ENCODE measurements at regions of chr12 and their contacts with region 1.

Region 1: GRCh38 chr12:47032644-47033043 is 46.8 kb upstream of the PCED1B start:
- DNase-seq: peak in 2 of 5 donors; percentile 55 to 56
- H3K4me3 ChIP-seq: no peak overlapping the region
- H3K4me3 Mint-ChIP-seq: no peak overlapping the region
- H3K27ac ChIP-seq: no peak overlapping the region
- H3K27ac Mint-ChIP-seq: peak overlapping the region in 1 of 8 donors; percentile 20
- H3K4me1 ChIP-seq: peaks cover 4% of the 10 kb centered on the region
- H3K4me1 Mint-ChIP-seq: peaks cover 17 to 19% (median 19%) of the 10 kb centered on the region in 3 donors
- H3K27me3 ChIP-seq: no peaks in the 10 kb centered on the region
- H3K27me3 Mint-ChIP-seq: peaks cover 1 to 3% of the 10 kb centered on the region in 2 donors

Region 2: GRCh38 chr12:47071241-47071852 is 38.7 kb after region 1 on chr12:
- CTCF ChIA-PET with region 1: interaction called, 22 read pairs
- POLR2A ChIA-PET with region 1: no interaction called
- DNase-seq: peak in 1 of 5 donors; percentile 31
- H3K4me3 ChIP-seq: no peak overlapping the region
- H3K4me3 Mint-ChIP-seq: no peak overlapping the region
- H3K27ac ChIP-seq: no peak overlapping the region
- H3K27ac Mint-ChIP-seq: peak overlapping the region in 1 of 8 donors; percentile 53
- H3K4me1 ChIP-seq: peaks cover under 1% of the 10 kb centered on the region
- H3K4me1 Mint-ChIP-seq: peaks cover 5 to 10% (median 10%) of the 10 kb centered on the region in 3 donors
- H3K27me3 ChIP-seq: no peaks in the 10 kb centered on the region
- H3K27me3 Mint-ChIP-seq: no peaks in the 10 kb centered on the region

Region 3: GRCh38 chr12:47307680-47308399 is 275.2 kb after region 1 on chr12:
- CTCF ChIA-PET with region 1: interaction called, 16 read pairs
- POLR2A ChIA-PET with region 1: no interaction called
- DNase-seq: peak in 3 of 5 donors; percentile 56 to 72 (median 57)
- H3K4me3 ChIP-seq: peak overlapping the region; percentile 67
- H3K4me3 Mint-ChIP-seq: peak overlapping the region; percentile 29 to 92 (median 86)
- H3K27ac ChIP-seq: no peak overlapping the region
- H3K27ac Mint-ChIP-seq: peak overlapping the region; percentile 62 to 93 (median 90)
- H3K4me1 ChIP-seq: peaks cover 14% of the 10 kb centered on the region
- H3K4me1 Mint-ChIP-seq: peaks cover 36 to 48% (median 41%) of the 10 kb centered on the region in 3 donors
- H3K27me3 ChIP-seq: no peaks in the 10 kb centered on the region
- H3K27me3 Mint-ChIP-seq: no peaks in the 10 kb centered on the region

Region 4: GRCh38 chr12:47408171-47408871 is 375.7 kb after region 1 on chr12:
- CTCF ChIA-PET with region 1: interaction called, 13 read pairs
- POLR2A ChIA-PET with region 1: no interaction called
- DNase-seq: peak in 3 of 5 donors; percentile 17 to 58 (median 38)
- H3K4me3 ChIP-seq: no peak overlapping the region
- H3K4me3 Mint-ChIP-seq: peak overlapping the region in 3 of 7 donors; percentile 25 to 61 (median 27)
- H3K27ac ChIP-seq: no peak overlapping the region
- H3K27ac Mint-ChIP-seq: peak overlapping the region in 3 of 8 donors; percentile 28 to 65 (median 43)
- H3K4me1 ChIP-seq: peaks cover 60% of the 10 kb centered on the region
- H3K4me1 Mint-ChIP-seq: peaks cover 20 to 57% (median 43%) of the 10 kb centered on the region in 3 donors
- H3K27me3 ChIP-seq: no peaks in the 10 kb centered on the region
- H3K27me3 Mint-ChIP-seq: no peaks in the 10 kb centered on the region